ENCODE measurements at regions of chr20 and their contacts with region 1.

Region 1: DNA sequence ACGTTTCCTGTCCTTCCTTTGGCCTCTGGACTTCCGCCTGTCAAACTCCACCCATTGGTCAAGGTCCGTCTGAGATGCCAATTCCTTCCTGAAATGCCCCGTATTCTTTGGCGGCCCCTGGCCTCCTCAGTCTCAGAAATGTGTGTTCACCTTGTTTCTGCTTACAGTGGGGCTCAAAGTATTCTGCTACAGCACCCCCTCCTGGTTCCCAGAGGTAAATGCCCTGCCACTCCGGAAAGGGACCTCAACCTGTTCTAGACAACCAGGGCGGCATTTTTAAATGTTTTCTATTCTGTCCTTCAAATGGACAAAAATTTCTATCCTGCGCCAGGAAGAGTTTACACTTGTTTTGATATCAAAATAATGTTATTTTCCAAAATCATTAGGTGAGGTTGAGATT is 12.1 kb upstream of the PAX1 start:
- DNase-seq: no peak
- ATAC-seq: no peak
- H3K4me3 ChIP-seq: no peak overlapping the region
- H3K27ac ChIP-seq: no peak overlapping the region
- H3K4me1 ChIP-seq: no peaks in the 10 kb centered on the region
- H3K27me3 ChIP-seq: peaks cover 0 to 48% (median 22%) of the 10 kb centered on the region in 9 donors
- CTCF ChIP-seq: peak in 5 of 12 donors; percentile 11 to 31 (median 22)
- POLR2A ChIP-seq: no peak

Region 2: DNA sequence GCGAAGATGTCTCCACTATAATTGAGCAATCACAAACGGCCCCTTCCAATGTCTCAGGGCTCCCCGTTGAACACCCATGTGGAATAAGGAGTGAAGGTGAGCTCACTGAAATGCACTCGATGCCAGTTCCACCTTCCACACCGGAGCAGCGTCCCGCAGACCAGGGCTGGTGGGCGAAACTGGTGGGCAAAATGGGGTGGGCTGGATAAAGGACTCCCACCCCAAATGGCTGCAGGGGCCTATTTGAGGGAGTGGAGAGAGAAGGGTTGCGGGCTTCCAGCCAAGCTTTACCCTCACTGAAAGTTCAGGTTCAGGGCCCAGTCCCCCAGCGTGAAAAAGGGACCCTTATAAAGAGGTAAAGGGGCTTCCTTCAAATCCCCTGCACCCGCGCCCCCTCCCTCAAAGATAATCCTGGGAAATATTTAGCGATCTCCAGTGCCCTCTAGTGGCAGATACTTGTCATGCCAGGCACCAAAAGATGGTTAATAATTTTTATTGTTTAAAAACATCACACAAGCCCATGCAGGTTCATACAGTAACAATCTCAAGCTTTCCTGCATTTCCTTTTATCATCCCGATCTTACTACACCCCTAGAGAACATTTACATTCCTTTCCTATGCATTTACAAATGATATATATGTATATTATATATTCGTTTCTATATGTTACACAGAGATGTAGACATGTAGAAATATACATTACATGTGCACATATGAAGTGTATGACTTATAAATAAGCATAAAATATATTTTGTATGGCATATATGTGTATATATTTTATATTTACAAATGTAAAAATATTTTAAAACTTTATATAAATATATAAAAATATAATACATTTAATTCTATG is 121.3 kb before region 1 on chr20:
- intact Hi-C with region 1: no loop called
- DNase-seq: no peak
- ATAC-seq: no peak
- H3K4me3 ChIP-seq: no peak overlapping the region
- H3K27ac ChIP-seq: no peak overlapping the region
- H3K4me1 ChIP-seq: no peaks in the 10 kb centered on the region
- H3K27me3 ChIP-seq: peaks cover 0 to 41% (median 17%) of the 10 kb centered on the region in 9 donors
- CTCF ChIP-seq: peak; percentile 74 to 89 (median 84)
- POLR2A ChIP-seq: no peak

Region 3: DNA sequence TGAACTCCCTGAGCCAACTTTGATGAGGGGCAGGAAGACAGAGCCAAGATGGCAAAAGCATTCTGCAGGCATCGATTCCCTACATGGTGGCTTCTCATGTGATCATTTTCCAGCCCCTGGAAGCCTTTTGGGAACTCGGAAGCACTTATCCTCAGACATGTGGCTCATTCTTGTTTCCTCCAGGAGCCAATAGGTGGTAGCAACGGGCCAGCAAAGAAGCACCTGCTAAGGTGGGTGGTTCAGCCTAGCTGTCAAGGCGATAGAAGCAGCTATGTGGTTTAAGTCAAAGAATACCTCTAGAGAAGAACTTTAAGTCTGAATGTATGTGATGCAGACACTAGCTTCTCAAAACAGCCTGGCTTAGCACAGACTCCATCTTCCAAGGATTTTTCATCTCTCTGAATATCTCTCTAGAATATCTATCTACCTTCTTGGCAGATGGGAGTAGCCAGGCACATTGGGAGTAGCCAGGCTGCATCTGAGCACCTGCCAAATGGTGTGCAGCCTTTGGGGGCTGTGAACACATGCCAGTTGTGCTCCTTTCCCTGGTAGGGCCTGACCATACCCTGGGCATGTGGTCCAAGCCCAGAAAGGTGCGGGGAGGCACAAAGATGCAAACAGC is 52.6 kb before region 1 on chr20:
- intact Hi-C with region 1: loop called in 1 of 10 experiments (anchors 5 kb)
- DNase-seq: no peak
- ATAC-seq: no peak
- H3K4me3 ChIP-seq: no peak overlapping the region
- H3K27ac ChIP-seq: no peak overlapping the region
- H3K4me1 ChIP-seq: no peaks in the 10 kb centered on the region
- H3K27me3 ChIP-seq: no peaks in the 10 kb centered on the region
- CTCF ChIP-seq: peak in 4 of 12 donors; percentile 11 to 25 (median 14)
- POLR2A ChIP-seq: no peak